GM10248 (cell line): ENCODE measurements at regions of chr1 and their contacts with region 1.

Region 1: GRCh38 chr1:234912548-234913277 is 215.9 kb downstream of the TOMM20 start:
- DNase-seq: no peak
- CTCF ChIP-seq: no peak

Region 2: DNA sequence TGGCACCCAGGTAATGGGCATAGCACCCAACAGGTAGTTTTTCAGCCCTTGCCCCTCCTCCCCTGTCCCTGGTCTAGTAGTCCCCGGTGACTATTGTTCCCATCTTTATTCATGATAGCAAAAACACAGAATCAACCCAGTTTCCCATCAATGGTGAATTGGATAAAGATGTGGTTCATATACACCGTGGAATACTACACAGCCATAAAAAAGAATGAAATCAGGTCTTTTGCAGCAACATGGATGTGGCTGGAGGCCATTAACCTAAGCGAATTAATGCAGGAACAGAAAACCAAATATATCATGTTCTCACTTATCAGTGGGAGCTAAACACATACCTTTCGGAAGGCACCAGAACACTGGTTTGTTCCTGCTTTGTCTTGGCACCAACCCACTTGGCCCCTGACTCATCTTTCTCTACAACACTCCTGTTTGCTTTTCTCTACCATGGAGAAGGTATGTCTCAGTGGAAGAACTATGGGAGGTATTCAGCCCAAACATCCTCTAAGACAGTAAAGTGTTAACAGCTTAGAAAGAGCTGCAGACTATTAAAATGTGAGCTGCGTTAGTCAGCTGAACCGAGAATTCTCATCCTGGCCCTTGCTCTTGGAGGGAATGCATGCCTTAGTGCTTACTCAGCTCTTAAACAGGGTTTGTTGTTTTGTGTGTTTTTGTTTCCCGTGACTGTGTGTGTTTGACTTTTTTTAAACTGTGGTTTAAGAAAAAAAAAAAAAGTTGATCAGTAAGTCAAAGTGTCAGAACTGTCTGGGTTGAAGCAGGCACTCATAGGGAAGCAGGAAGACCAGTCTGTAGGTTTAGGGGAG is 12.9 kb after region 1 on chr1:
- CTCF ChIA-PET with region 1: interaction called, 21 read pairs
- POLR2A ChIA-PET with region 1: no interaction called
- DNase-seq: no peak
- CTCF ChIP-seq: no peak